ENCODE measurements at regions of chr1 and their contacts with region 1.

Region 1: GRCh38 chr1:15430787-15431570 is 7.3 kb upstream of the CTRC start:
- DNase-seq: peak; percentile 57
- H3K4me3 Mint-ChIP-seq: no peak overlapping the region
- H3K27ac Mint-ChIP-seq: no peak overlapping the region
- H3K4me1 Mint-ChIP-seq: peaks cover 6% of the 10 kb centered on the region
- H3K27me3 Mint-ChIP-seq: no peaks in the 10 kb centered on the region

Region 2: GRCh38 chr1:14996133-14997050 is 434.6 kb before region 1 on chr1:
- intact Hi-C with region 1: no loop called
- DNase-seq: no peak
- H3K4me3 Mint-ChIP-seq: no peak overlapping the region
- H3K27ac Mint-ChIP-seq: no peak overlapping the region
- H3K4me1 Mint-ChIP-seq: no peaks in the 10 kb centered on the region
- H3K27me3 Mint-ChIP-seq: no peaks in the 10 kb centered on the region

Region 3: GRCh38 chr1:15323351-15323988 is 107.5 kb before region 1 on chr1:
- intact Hi-C with region 1: loop called (anchors 1 kb)
- DNase-seq: peak; percentile 61
- H3K4me3 Mint-ChIP-seq: no peak overlapping the region
- H3K27ac Mint-ChIP-seq: no peak overlapping the region
- H3K4me1 Mint-ChIP-seq: peaks cover 5% of the 10 kb centered on the region
- H3K27me3 Mint-ChIP-seq: peaks cover 17% of the 10 kb centered on the region

Region 4: GRCh38 chr1:15384301-15384901 is 46.6 kb before region 1 on chr1:
- intact Hi-C with region 1: loop called (anchors 2 kb)
- DNase-seq: no peak
- H3K4me3 Mint-ChIP-seq: no peak overlapping the region
- H3K27ac Mint-ChIP-seq: no peak overlapping the region
- H3K4me1 Mint-ChIP-seq: peaks cover 10% of the 10 kb centered on the region
- H3K27me3 Mint-ChIP-seq: peaks cover 47% of the 10 kb centered on the region